Ovary (tissue), 10 donors: ENCODE measurements at regions of chr4 and their contacts with region 1.

Region 1: GRCh38 chr4:113952452-113953029 is 26.9 kb downstream of the ARSJ start:
- DNase-seq: no peak
- H3K4me3 ChIP-seq: no peak overlapping the region
- H3K27ac ChIP-seq: no peak overlapping the region
- H3K4me1 ChIP-seq: no peaks in the 10 kb centered on the region
- H3K27me3 ChIP-seq: no peaks in the 10 kb centered on the region
- CTCF ChIP-seq: peak; percentile 27 to 55 (median 48)
- EP300 ChIP-seq: no peak
- POLR2A ChIP-seq: no peak

Region 2: DNA sequence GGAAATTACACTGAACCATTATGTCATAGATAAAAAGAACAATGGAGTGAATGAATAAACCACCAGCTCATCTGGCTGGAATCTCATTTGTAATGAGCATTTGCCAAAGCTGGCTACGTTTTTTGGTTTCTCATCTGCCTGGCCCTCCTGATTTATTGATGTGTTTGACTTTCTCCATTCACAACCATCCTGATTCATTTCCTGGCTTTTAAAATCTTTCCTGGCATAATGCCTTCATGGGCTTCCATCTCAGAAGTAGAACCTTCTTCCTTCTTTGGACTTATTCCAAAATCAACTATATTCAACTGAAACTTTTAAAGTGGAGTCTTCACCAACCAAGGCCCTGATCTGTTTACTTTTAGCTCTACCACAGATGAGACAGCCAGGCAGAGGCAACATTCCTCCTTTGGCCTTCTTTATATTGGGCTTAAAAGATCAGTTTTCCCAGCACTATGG is 62.9 kb after region 1 on chr4:
- intact Hi-C with region 1: no loop called
- DNase-seq: no peak
- H3K4me3 ChIP-seq: no peak overlapping the region
- H3K27ac ChIP-seq: no peak overlapping the region
- H3K4me1 ChIP-seq: no peaks in the 10 kb centered on the region
- H3K27me3 ChIP-seq: no peaks in the 10 kb centered on the region
- CTCF ChIP-seq: no peak
- EP300 ChIP-seq: no peak
- POLR2A ChIP-seq: no peak

Region 3: DNA sequence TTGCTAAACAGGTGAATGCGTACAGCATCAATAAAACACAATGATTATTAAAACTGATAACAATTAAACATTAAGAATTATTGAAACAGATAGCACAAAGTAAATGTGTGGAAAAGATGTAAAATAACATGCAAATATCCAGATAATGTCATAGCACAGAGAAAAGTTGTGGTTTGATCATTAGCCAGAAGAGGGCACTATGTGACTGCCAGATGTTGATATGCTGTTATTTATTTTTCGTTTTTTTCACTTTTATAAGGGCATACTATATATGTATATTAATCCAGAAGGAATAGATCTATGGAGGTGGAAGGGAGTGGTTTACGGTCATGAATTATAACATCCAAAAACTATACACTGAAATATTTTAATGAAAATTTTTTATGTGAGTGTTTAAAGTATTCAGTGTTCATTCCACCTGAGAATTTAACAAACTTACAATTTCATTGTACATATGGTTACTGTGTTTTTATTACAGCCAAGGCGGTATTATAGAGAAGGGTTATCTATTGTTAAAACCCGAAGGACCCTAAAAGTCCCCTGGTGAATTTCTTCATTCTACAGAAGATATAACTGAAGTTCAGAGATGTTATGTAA is 434.2 kb after region 1 on chr4:
- intact Hi-C with region 1: loop called in 1 of 4 experiments (anchors 5 kb)
- DNase-seq: no peak
- H3K4me3 ChIP-seq: no peak overlapping the region
- H3K27ac ChIP-seq: no peak overlapping the region
- H3K4me1 ChIP-seq: no peaks in the 10 kb centered on the region
- H3K27me3 ChIP-seq: no peaks in the 10 kb centered on the region
- CTCF ChIP-seq: no peak
- EP300 ChIP-seq: no peak
- POLR2A ChIP-seq: no peak